ENCODE measurements at regions of chr12 and their contacts with region 1.

Region 1: DNA sequence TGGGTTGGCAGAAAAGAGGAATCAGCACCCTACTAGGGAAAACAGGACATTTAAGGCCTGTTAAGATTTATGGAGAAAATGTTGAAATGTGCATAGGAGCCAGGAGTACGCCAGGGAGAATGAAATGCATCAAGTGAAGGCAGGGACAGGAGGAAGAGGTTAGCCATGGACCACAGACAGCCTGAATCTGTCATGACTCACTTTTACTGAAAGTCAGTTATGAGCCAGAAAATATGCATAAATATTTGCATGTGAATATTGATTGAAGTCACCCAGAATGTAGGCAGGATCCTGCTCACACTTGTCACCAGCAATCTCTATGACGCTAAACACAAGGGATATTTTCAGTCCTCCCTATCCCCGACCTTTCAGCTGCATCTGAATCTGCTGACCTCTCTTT is 25.1 kb upstream of the CDK17 start:
- DNase-seq: no peak
- ATAC-seq: no peak
- H3K4me3 ChIP-seq: no peak overlapping the region
- H3K4me3 Mint-ChIP-seq: no peak overlapping the region
- H3K27ac ChIP-seq: no peak overlapping the region
- H3K27ac Mint-ChIP-seq: no peak overlapping the region
- H3K4me1 ChIP-seq: peaks cover 12% of the 10 kb centered on the region
- H3K4me1 Mint-ChIP-seq: peaks cover 19% of the 10 kb centered on the region
- H3K27me3 ChIP-seq: no peaks in the 10 kb centered on the region
- H3K27me3 Mint-ChIP-seq: no peaks in the 10 kb centered on the region
- CTCF ChIP-seq: no peak

Region 2: GRCh38 chr12:96409731-96410130 is 15.6 kb before region 1 on chr12:
- CTCF ChIA-PET with region 1: interaction called, 3 read pairs
- POLR2A ChIA-PET with region 1: no interaction called
- intact Hi-C with region 1: loop called in 1 of 2 experiments (anchors 2 kb)
- DNase-seq: no peak
- ATAC-seq: no peak
- H3K4me3 ChIP-seq: no peak overlapping the region
- H3K4me3 Mint-ChIP-seq: no peak overlapping the region
- H3K27ac ChIP-seq: no peak overlapping the region
- H3K27ac Mint-ChIP-seq: no peak overlapping the region
- H3K4me1 ChIP-seq: no peaks in the 10 kb centered on the region
- H3K4me1 Mint-ChIP-seq: no peaks in the 10 kb centered on the region
- H3K27me3 ChIP-seq: no peaks in the 10 kb centered on the region
- H3K27me3 Mint-ChIP-seq: no peaks in the 10 kb centered on the region
- CTCF ChIP-seq: no peak

Region 3: GRCh38 chr12:96828169-96828789 is 403.0 kb after region 1 on chr12:
- CTCF ChIA-PET with region 1: no interaction called
- POLR2A ChIA-PET with region 1: no interaction called
- intact Hi-C with region 1: no loop called
- DNase-seq: peak in 2 of 14 experiments; percentile 3 to 4
- ATAC-seq: no peak
- H3K4me3 ChIP-seq: no peak overlapping the region
- H3K4me3 Mint-ChIP-seq: no peak overlapping the region
- H3K27ac ChIP-seq: no peak overlapping the region
- H3K27ac Mint-ChIP-seq: no peak overlapping the region
- H3K4me1 ChIP-seq: no peaks in the 10 kb centered on the region
- H3K4me1 Mint-ChIP-seq: no peaks in the 10 kb centered on the region
- H3K27me3 ChIP-seq: no peaks in the 10 kb centered on the region
- H3K27me3 Mint-ChIP-seq: no peaks in the 10 kb centered on the region
- CTCF ChIP-seq: no peak